HEK293 (cell line): ENCODE measurements at regions of chr18 and their contacts with region 1.

Region 1: GRCh38 chr18:32238635-32239268 is 48.9 kb downstream of the MEP1B start:
- H3K4me3 ChIP-seq: no peak overlapping the region
- H3K27ac ChIP-seq: no peak overlapping the region
- H3K4me1 ChIP-seq: no peaks in the 10 kb centered on the region
- CTCF ChIP-seq: no peak

Region 2: GRCh38 chr18:32219431-32220018 is 19.2 kb before region 1 on chr18:
- CTCF ChIA-PET with region 1: interaction called, 10 read pairs
- POLR2A ChIA-PET with region 1: no interaction called
- H3K4me3 ChIP-seq: no peak overlapping the region
- H3K27ac ChIP-seq: no peak overlapping the region
- H3K4me1 ChIP-seq: no peaks in the 10 kb centered on the region
- CTCF ChIP-seq: no peak